OCI-LY7 (cell line): ENCODE measurements at regions of chr1 and their contacts with region 1.

Region 1: DNA sequence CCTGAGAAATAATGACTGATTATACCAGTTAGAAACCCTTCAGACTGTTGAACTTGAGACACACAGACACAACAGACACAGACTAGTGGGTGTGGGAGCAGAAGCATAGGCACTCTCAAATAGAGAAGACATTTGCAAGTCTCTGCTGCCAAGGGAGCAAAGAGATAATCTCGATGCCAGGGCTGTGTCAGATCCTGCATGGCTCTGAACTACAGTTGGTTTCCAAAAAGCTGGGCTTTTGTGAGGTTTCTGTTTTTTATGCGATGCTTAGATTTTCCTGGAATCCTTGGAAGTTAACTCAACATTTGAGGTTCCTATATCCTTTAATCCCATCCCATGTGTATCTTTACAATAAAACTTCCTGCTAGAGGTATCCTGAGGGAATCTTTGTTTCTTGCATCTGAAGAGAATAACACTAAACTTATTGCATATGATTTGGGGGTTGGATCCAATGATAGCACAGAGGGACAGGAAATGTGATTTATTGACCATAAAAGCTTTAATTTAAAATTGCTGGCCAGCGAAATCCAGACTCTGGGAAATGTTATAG is 236.4 kb downstream of the SPATA17 start:
- DNase-seq: no peak
- H3K4me3 ChIP-seq: no peak overlapping the region
- H3K27ac ChIP-seq: no peak overlapping the region
- H3K4me1 ChIP-seq: no peaks in the 10 kb centered on the region
- CTCF ChIP-seq: no peak

Region 2: GRCh38 chr1:217642455-217642854 is 225.1 kb before region 1 on chr1:
- CTCF ChIA-PET with region 1: no interaction called
- POLR2A ChIA-PET with region 1: no interaction called
- intact Hi-C with region 1: no loop called
- DNase-seq: no peak
- H3K4me3 ChIP-seq: no peak overlapping the region
- H3K27ac ChIP-seq: no peak overlapping the region
- H3K4me1 ChIP-seq: no peaks in the 10 kb centered on the region
- CTCF ChIP-seq: no peak

Region 3: DNA sequence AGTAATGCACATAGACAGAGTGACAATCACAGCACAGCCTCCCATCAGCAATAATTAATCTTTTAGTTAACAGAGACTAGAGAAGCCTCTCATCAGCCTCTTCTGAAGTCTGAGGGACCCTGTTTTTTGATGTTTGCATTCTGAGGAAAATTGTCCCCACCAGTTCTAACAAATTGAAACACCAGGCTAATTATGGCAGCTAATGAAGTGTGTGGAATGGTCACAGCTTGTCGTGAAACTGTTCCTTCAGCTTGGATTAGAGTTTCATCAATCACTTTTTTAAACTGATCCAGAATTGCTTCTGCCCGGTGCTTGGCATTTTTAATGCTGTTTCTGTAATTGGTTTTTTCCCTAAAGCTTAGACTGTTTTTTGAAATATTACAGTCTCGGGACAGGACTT is 28.4 kb before region 1 on chr1:
- CTCF ChIA-PET with region 1: no interaction called
- POLR2A ChIA-PET with region 1: interaction called, 12 read pairs
- intact Hi-C with region 1: no loop called
- DNase-seq: no peak
- H3K4me3 ChIP-seq: no peak overlapping the region
- H3K27ac ChIP-seq: no peak overlapping the region
- H3K4me1 ChIP-seq: no peaks in the 10 kb centered on the region
- CTCF ChIP-seq: no peak

Region 4: GRCh38 chr1:217897100-217897499 is 29.6 kb after region 1 on chr1:
- CTCF ChIA-PET with region 1: no interaction called
- POLR2A ChIA-PET with region 1: no interaction called
- intact Hi-C with region 1: no loop called
- DNase-seq: no peak
- H3K4me3 ChIP-seq: no peak overlapping the region
- H3K27ac ChIP-seq: no peak overlapping the region
- H3K4me1 ChIP-seq: no peaks in the 10 kb centered on the region
- CTCF ChIP-seq: no peak

Region 5: GRCh38 chr1:217907504-217907903 is 40.0 kb after region 1 on chr1:
- CTCF ChIA-PET with region 1: no interaction called
- POLR2A ChIA-PET with region 1: no interaction called
- intact Hi-C with region 1: no loop called
- DNase-seq: no peak
- H3K4me3 ChIP-seq: no peak overlapping the region
- H3K27ac ChIP-seq: no peak overlapping the region
- H3K4me1 ChIP-seq: no peaks in the 10 kb centered on the region
- CTCF ChIP-seq: no peak